ENCODE measurements at regions of chr4 and their contacts with region 1.

Region 1: DNA sequence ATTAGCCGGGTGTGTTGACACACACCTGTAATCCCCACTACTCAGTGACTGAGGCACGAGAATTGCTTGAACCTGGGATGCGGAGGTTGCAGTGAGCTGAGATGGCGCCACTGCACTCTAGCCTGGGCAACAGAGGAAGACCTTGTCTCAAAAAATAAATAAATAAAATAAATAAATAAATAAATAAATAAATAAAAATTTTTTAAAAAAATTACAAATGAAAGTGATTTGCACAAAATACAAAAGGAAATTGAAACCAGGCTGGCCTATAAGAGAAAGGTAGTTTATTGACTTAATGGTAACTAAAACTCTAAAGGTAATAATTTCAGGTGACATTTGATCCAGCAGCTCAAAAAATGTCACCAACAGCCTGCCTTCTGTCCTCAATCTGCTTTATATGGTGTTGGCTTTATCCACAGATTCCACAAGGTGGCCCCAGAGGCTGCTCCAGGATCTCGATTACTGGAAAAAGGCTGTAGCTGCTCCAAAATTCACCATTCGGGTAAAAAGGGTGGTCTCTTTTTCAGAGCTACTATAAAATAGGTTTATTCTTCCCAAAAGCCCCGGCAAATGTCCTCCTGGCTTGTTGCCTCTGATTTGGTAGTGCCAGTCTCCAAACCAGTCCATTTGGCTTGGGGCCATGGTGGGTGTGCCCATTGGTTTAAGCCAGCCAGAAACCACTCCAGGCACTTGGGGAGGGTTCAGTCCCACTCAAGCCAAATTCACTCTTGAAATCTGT is 61.4 kb upstream of the TRIM2 start:
- DNase-seq: peak; percentile 92
- H3K4me3 ChIP-seq: peak overlapping the region; percentile 20
- H3K27ac ChIP-seq: peak overlapping the region; percentile 64
- H3K4me1 ChIP-seq: peaks cover 30% of the 10 kb centered on the region
- H3K27me3 ChIP-seq: no peaks in the 10 kb centered on the region
- CTCF ChIP-seq: peak; percentile 93

Region 2: GRCh38 chr4:153318696-153319320 is 175.9 kb after region 1 on chr4:
- CTCF ChIA-PET with region 1: interaction called, 9 read pairs
- POLR2A ChIA-PET with region 1: no interaction called
- intact Hi-C with region 1: loop called (anchors 1 kb)
- DNase-seq: peak; percentile 82
- H3K4me3 ChIP-seq: no peak overlapping the region
- H3K27ac ChIP-seq: no peak overlapping the region
- H3K4me1 ChIP-seq: no peaks in the 10 kb centered on the region
- H3K27me3 ChIP-seq: no peaks in the 10 kb centered on the region
- CTCF ChIP-seq: peak; percentile 81

Region 3: GRCh38 chr4:153393397-153393796 is 250.5 kb after region 1 on chr4:
- CTCF ChIA-PET with region 1: no interaction called
- POLR2A ChIA-PET with region 1: no interaction called
- intact Hi-C with region 1: no loop called
- DNase-seq: no peak
- H3K4me3 ChIP-seq: no peak overlapping the region
- H3K27ac ChIP-seq: no peak overlapping the region
- H3K4me1 ChIP-seq: no peaks in the 10 kb centered on the region
- H3K27me3 ChIP-seq: no peaks in the 10 kb centered on the region
- CTCF ChIP-seq: no peak

Region 4: DNA sequence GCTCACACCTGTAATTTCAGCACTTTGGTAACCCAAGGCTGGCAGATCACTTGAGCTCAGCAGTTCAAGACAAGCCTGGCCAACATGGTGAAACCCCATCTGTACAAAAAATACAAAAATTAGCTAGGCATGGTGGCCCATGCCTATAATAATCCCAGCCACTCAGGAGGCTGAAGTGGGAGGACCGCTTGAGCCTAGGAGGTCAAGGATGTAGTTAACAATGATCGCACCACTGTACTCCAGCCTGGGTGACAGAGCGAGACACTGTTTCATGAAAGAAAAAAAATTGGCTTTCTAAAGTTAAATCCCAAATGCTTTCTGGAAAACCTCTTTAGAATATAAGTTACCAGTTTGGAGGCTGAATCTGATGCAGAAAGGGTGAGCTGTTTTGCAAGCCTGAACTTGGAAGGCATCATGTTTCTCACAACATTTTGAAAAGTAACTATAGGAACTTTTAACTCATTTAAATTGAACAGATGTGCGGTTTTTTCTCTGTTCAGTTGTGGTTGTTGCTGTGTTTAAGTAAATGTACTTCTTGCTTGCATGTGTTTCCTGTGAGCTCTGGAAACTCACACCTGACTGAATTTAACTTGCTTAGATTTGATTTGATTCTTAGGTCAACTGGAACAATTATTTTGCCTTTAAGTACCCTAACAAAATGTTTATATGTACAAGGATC is 283.5 kb after region 1 on chr4:
- CTCF ChIA-PET with region 1: no interaction called
- POLR2A ChIA-PET with region 1: no interaction called
- intact Hi-C with region 1: loop called (anchors 10 kb)
- DNase-seq: no peak
- H3K4me3 ChIP-seq: no peak overlapping the region
- H3K27ac ChIP-seq: no peak overlapping the region
- H3K4me1 ChIP-seq: no peaks in the 10 kb centered on the region
- H3K27me3 ChIP-seq: no peaks in the 10 kb centered on the region
- CTCF ChIP-seq: no peak

Region 5: GRCh38 chr4:153573881-153574802 is 431.3 kb after region 1 on chr4:
- CTCF ChIA-PET with region 1: interaction called, 9 read pairs
- POLR2A ChIA-PET with region 1: no interaction called
- intact Hi-C with region 1: loop called (anchors 1 kb)
- DNase-seq: peak; percentile 85
- H3K4me3 ChIP-seq: no peak overlapping the region
- H3K27ac ChIP-seq: no peak overlapping the region
- H3K4me1 ChIP-seq: peaks cover 18% of the 10 kb centered on the region
- H3K27me3 ChIP-seq: no peaks in the 10 kb centered on the region
- CTCF ChIP-seq: peak; percentile 81

Region 6: GRCh38 chr4:153649572-153649991 is 506.7 kb after region 1 on chr4:
- CTCF ChIA-PET with region 1: no interaction called
- POLR2A ChIA-PET with region 1: no interaction called
- intact Hi-C with region 1: loop called (anchors 5 kb)
- DNase-seq: peak; percentile 55
- H3K4me3 ChIP-seq: no peak overlapping the region
- H3K27ac ChIP-seq: no peak overlapping the region
- H3K4me1 ChIP-seq: peaks cover 14% of the 10 kb centered on the region
- H3K27me3 ChIP-seq: no peaks in the 10 kb centered on the region
- CTCF ChIP-seq: peak; percentile 58

Region 7: GRCh38 chr4:153750197-153750817 is 607.4 kb after region 1 on chr4:
- CTCF ChIA-PET with region 1: no interaction called
- POLR2A ChIA-PET with region 1: no interaction called
- intact Hi-C with region 1: loop called (anchors 5 kb)
- DNase-seq: peak; percentile 90
- H3K4me3 ChIP-seq: no peak overlapping the region
- H3K27ac ChIP-seq: no peak overlapping the region
- H3K4me1 ChIP-seq: no peaks in the 10 kb centered on the region
- H3K27me3 ChIP-seq: no peaks in the 10 kb centered on the region
- CTCF ChIP-seq: peak; percentile 89